Endothelial cell of umbilical vein (primary cell): ENCODE measurements at regions of chr6 and their contacts with region 1.

Region 1: GRCh38 chr6:36678518-36679027 is at the start of gene CDKN1A:
- DNase-seq: peak; percentile 94
- H3K4me3 ChIP-seq: peak within 1 kb of the TSS; percentile 51 to 81 (median 73)
- H3K27ac ChIP-seq: peak within 1 kb of the TSS; percentile 88
- H3K4me1 ChIP-seq: peaks cover 37% of the 10 kb centered on the region
- H3K27me3 ChIP-seq: no peaks in the 10 kb centered on the region
- CTCF ChIP-seq: no peak
- POLR2A ChIP-seq: peak; percentile 100
- total RNA-seq, gene CDKN1A: 170 and 199 TPM in 2 replicates

Region 2: GRCh38 chr6:36423101-36423824 is 255.3 kb before region 1 on chr6:
- CTCF ChIA-PET with region 1: no interaction called
- POLR2A ChIA-PET with region 1: no interaction called
- dilution Hi-C with region 1: no loop called
- intact Hi-C with region 1: loop called (anchors 5 kb)
- DNase-seq: peak; percentile 98
- H3K4me3 ChIP-seq: peak overlapping the region; percentile 52 to 75 (median 63)
- H3K27ac ChIP-seq: peak overlapping the region; percentile 54
- H3K4me1 ChIP-seq: peaks cover 12% of the 10 kb centered on the region
- H3K27me3 ChIP-seq: no peaks in the 10 kb centered on the region
- CTCF ChIP-seq: peak; percentile 59 to 74
- POLR2A ChIP-seq: peak; percentile 78

Region 3: GRCh38 chr6:36451391-36451790 is 227.2 kb before region 1 on chr6:
- CTCF ChIA-PET with region 1: no interaction called
- POLR2A ChIA-PET with region 1: no interaction called
- dilution Hi-C with region 1: no loop called
- intact Hi-C with region 1: no loop called
- DNase-seq: no peak
- H3K4me3 ChIP-seq: no peak overlapping the region
- H3K27ac ChIP-seq: no peak overlapping the region
- H3K4me1 ChIP-seq: no peaks in the 10 kb centered on the region
- H3K27me3 ChIP-seq: no peaks in the 10 kb centered on the region
- CTCF ChIP-seq: no peak
- POLR2A ChIP-seq: no peak

Region 4: GRCh38 chr6:36615018-36615761 is 63.4 kb before region 1 on chr6:
- CTCF ChIA-PET with region 1: interaction called, 44 read pairs
- POLR2A ChIA-PET with region 1: interaction called, 12 read pairs
- dilution Hi-C with region 1: loop called (anchors 10 kb)
- intact Hi-C with region 1: loop called (anchors 2 kb)
- DNase-seq: peak; percentile 85
- H3K4me3 ChIP-seq: no peak overlapping the region
- H3K27ac ChIP-seq: no peak overlapping the region
- H3K4me1 ChIP-seq: peaks cover 17% of the 10 kb centered on the region
- H3K27me3 ChIP-seq: no peaks in the 10 kb centered on the region
- CTCF ChIP-seq: peak; percentile 65 to 74
- POLR2A ChIP-seq: no peak

Region 5: DNA sequence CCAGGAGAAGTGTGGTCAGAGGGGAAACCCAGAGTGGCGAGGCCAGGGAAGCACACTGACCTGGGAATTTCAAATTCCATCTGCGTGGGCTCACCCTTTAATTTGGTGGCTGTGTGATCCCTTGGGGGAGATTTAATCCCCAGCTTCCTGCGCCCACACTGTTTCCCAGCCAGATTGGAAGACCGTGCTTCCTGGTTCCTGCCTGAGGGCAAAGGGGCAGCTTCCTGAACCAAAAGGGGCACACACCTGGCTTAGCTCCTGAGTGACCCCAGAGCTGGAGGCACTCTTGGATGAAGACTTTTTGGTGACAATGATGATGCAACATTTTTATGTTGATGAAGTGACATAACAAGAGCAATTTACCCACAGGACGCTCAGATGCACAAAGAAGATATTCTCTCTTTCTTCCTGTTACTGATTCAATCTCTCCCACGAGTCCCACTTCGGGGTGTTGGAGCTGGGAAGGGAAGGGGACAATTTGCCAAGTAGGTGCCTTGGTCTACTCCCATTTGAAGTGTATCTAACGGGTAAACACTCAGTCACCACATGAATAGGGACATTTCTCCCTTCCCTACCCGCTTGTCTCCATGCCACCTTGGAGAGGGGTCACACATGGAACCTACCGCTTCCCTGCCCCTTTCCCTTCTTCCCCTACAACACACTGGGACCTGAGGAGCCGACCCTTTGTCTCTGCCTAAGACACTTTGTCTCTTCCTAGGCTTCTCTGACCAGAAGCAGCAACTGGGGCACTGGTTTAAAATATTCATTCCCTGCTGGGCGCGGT is 28.7 kb before region 1 on chr6:
- CTCF ChIA-PET with region 1: interaction called, 3 read pairs
- POLR2A ChIA-PET with region 1: interaction called, 4 read pairs
- dilution Hi-C with region 1: no loop called
- intact Hi-C with region 1: loop called (anchors 2 kb)
- DNase-seq: no peak
- H3K4me3 ChIP-seq: no peak overlapping the region
- H3K27ac ChIP-seq: no peak overlapping the region
- H3K4me1 ChIP-seq: peaks cover 16% of the 10 kb centered on the region
- H3K27me3 ChIP-seq: peaks cover 0 to 3% of the 10 kb centered on the region in 2 experiments
- CTCF ChIP-seq: no peak
- POLR2A ChIP-seq: no peak

Region 6: GRCh38 chr6:36724514-36725390 is 46.2 kb after region 1 on chr6:
- CTCF ChIA-PET with region 1: interaction called, 5 read pairs
- POLR2A ChIA-PET with region 1: no interaction called
- dilution Hi-C with region 1: no loop called
- intact Hi-C with region 1: loop called (anchors 2 kb)
- DNase-seq: peak; percentile 73
- H3K4me3 ChIP-seq: no peak overlapping the region
- H3K27ac ChIP-seq: no peak overlapping the region
- H3K4me1 ChIP-seq: peaks cover 2% of the 10 kb centered on the region
- H3K27me3 ChIP-seq: no peaks in the 10 kb centered on the region
- CTCF ChIP-seq: peak; percentile 43 to 64
- POLR2A ChIP-seq: no peak

Region 7: DNA sequence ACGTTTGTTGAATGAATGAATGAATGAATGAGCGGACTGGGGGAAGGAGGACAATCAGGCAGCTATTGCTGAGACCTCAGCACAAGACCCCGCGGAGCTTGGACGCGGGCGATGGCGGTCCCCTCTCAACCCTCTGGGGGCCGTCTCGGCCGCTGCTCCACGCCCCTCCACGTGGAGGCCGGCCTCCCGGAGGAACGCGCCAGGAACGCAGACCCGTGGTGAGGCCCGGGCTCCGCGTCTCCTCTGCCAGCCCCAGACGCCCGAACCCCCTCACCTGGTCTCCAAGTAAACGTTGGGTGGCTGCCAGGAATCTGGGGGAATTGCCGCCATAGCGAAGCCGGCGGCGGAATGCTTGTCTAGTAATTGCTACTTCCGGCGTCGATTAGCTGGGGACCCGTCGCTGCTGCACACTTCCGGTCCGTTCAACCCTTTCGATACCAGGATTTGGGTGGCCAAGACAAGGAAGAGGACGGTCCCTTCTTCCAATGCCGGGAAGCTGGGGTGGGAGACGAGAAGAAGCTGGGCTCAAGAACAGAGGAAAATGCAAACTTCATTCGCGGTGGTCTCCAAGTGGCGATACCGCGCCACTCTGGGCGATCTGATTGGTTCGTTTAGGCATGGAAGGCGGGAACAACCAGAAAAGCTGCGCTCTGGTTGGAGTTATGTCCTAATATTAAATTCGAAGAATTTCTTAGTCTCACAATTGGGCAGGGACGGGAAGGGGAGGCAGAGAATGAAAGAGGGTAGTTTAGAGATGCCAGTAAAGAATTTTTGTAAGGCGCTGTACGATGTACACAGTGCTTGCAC is 196.1 kb after region 1 on chr6 and contains the start of gene PPIL1:
- CTCF ChIA-PET with region 1: no interaction called
- POLR2A ChIA-PET with region 1: interaction called, 4 read pairs
- dilution Hi-C with region 1: no loop called
- intact Hi-C with region 1: loop called (anchors 5 kb)
- DNase-seq: peak; percentile 93
- H3K4me3 ChIP-seq: peak within 1 kb of the TSS; percentile 63 to 95 (median 67)
- H3K27ac ChIP-seq: peak within 1 kb of the TSS; percentile 82
- H3K4me1 ChIP-seq: peaks cover 12% of the 10 kb centered on the region
- H3K27me3 ChIP-seq: no peaks in the 10 kb centered on the region
- CTCF ChIP-seq: peak in 1 of 2 donors; percentile 2
- POLR2A ChIP-seq: peak; percentile 59
- total RNA-seq, gene PPIL1: 33.8 and 35.6 TPM in 2 replicates